ENCODE measurements at regions of chr21 and their contacts with region 1.

Region 1: GRCh38 chr21:25360593-25360992 is 246.7 kb downstream of the MRPL39 start:
- DNase-seq: no peak
- H3K4me3 ChIP-seq: no peak overlapping the region
- H3K27ac ChIP-seq: no peak overlapping the region
- H3K27me3 ChIP-seq: no peaks in the 10 kb centered on the region
- CTCF ChIP-seq: peak; percentile 29; the same call in 1 of the 2 replicates

Region 2: DNA sequence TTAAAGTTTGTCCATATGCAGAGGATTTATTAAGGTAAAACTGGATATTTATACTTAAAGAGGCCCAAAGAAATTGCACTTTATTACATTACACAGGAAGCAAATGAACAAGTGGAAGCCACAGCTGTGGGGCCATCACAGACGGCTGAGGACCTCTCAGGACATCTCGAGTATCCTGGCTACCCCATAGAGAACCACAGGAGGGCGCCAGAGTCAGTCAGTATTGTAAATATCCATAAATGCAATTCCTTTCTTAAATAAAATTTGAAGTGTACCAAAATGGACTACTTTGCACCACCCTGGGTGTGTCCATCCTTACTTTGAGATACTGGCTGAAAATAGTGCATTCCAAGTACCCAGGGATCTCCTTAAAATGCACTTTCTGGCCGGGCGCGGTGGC is 10.5 kb before region 1 on chr21:
- CTCF ChIA-PET with region 1: interaction called, 24 read pairs
- POLR2A ChIA-PET with region 1: no interaction called
- DNase-seq: no peak
- H3K4me3 ChIP-seq: no peak overlapping the region
- H3K27ac ChIP-seq: no peak overlapping the region
- H3K27me3 ChIP-seq: no peaks in the 10 kb centered on the region
- CTCF ChIP-seq: peak; percentile 67

Measured in AG04450 (cell line).